ENCODE measurements at regions of chr16 and their contacts with region 1.

Region 1: GRCh38 chr16:2520092-2520783 is at the start of gene AMDHD2:
- DNase-seq: peak; percentile 82
- ATAC-seq: peak; percentile 78
- H3K4me3 ChIP-seq: peak within 1 kb of the TSS; percentile 78
- H3K27ac ChIP-seq: peak within 1 kb of the TSS; percentile 48
- H3K4me1 ChIP-seq: peaks cover 28% of the 10 kb centered on the region
- H3K27me3 ChIP-seq: no peaks in the 10 kb centered on the region
- CTCF ChIP-seq: no peak
- total RNA-seq, gene AMDHD2: 50.3 and 62.8 TPM in 2 replicates

Region 2: GRCh38 chr16:2459647-2460390 is 60.4 kb before region 1 on chr16 and contains the start of gene TEDC2:
- CTCF ChIA-PET with region 1: no interaction called
- POLR2A ChIA-PET with region 1: interaction called, 13 read pairs
- intact Hi-C with region 1: no loop called
- DNase-seq: peak; percentile 93
- ATAC-seq: peak; percentile 89
- H3K4me3 ChIP-seq: peak within 1 kb of the TSS; percentile 74
- H3K27ac ChIP-seq: no peak within 1 kb of the TSS
- H3K4me1 ChIP-seq: peaks cover 14% of the 10 kb centered on the region
- H3K27me3 ChIP-seq: no peaks in the 10 kb centered on the region
- CTCF ChIP-seq: no peak
- total RNA-seq, gene TEDC2: 35.5 and 44.9 TPM in 2 replicates

Region 3: DNA sequence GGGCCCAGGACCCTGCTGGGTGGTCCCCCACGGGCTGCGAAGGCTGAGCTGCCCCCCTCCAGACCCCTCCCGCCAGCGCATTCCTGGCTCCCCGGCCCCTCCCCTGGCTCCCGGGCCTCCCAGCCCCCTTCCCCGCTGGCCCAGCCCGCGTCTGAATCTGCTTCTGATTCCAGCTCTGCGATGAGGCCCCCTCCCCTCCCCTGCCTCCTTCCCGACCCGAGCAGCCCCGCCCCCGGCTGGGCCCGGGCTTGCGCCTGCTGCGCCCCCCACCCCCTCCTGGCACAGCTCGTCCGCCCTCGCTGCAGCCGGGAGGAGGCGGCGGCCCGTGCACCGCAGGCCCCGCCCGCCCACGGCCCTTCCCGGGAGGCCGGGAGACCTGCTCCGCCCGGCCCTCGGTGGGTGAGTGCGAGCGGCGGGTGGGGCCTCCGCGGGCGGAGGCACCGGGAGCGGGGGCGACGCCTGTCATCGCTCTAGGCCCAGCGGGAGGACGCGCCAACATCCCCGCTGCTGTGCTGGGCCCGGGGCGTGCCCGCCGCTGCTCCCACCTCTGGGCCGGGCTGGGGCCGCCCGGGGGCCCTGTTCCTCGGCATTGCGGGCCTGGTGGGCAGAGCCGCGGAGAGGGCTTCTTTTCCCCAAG is 49.1 kb before region 1 on chr16 and contains the start of gene NTN3:
- CTCF ChIA-PET with region 1: no interaction called
- POLR2A ChIA-PET with region 1: no interaction called
- intact Hi-C with region 1: no loop called
- DNase-seq: peak; percentile 6
- ATAC-seq: no peak
- H3K4me3 ChIP-seq: no peak within 1 kb of the TSS; the same call in 1 of the 2 replicates
- H3K27ac ChIP-seq: no peak within 1 kb of the TSS
- H3K4me1 ChIP-seq: peaks cover 9% of the 10 kb centered on the region; the same call in 1 of the 2 replicates
- H3K27me3 ChIP-seq: no peaks in the 10 kb centered on the region
- CTCF ChIP-seq: no peak
- total RNA-seq, gene NTN3: not detected in 2 replicates

Region 4: GRCh38 chr16:2531358-2531766 is 11.1 kb after region 1 on chr16 and contains the start of gene CEMP1:
- CTCF ChIA-PET with region 1: no interaction called
- POLR2A ChIA-PET with region 1: interaction called, 14 read pairs
- intact Hi-C with region 1: no loop called
- DNase-seq: no peak
- ATAC-seq: no peak
- H3K4me3 ChIP-seq: peak within 1 kb of the TSS; percentile 69
- H3K27ac ChIP-seq: peak within 1 kb of the TSS; percentile 51
- H3K4me1 ChIP-seq: peaks cover 7% of the 10 kb centered on the region; the same call in 1 of the 2 replicates
- H3K27me3 ChIP-seq: no peaks in the 10 kb centered on the region
- CTCF ChIP-seq: no peak
- total RNA-seq, gene CEMP1: 0.46 TPM in 1 of 2 replicates, not detected in the other

Measured in PC-3 (cell line).